Pancreas (tissue), 10 donors: ENCODE measurements at regions of chr3 and their contacts with region 1.

Region 1: GRCh38 chr3:42190701-42191462 is 75.1 kb downstream of the CCK start:
- DNase-seq: peak in 5 of 6 donors; percentile 46 to 82 (median 60)
- ATAC-seq: peak; percentile 61 to 89 (median 86)
- H3K4me3 ChIP-seq: no peak overlapping the region
- H3K27ac ChIP-seq: no peak overlapping the region
- H3K4me1 ChIP-seq: no peaks in the 10 kb centered on the region
- H3K27me3 ChIP-seq: no peaks in the 10 kb centered on the region
- CTCF ChIP-seq: peak; percentile 57 to 91 (median 74)

Region 2: GRCh38 chr3:41893977-41894376 is 296.9 kb before region 1 on chr3:
- intact Hi-C with region 1: loop called in 1 of 3 experiments (anchors 10 kb)
- DNase-seq: peak in 1 of 6 donors; percentile 10
- ATAC-seq: peak in 2 of 4 donors; percentile 42 to 67
- H3K4me3 ChIP-seq: no peak overlapping the region
- H3K27ac ChIP-seq: no peak overlapping the region
- H3K4me1 ChIP-seq: no peaks in the 10 kb centered on the region
- H3K27me3 ChIP-seq: no peaks in the 10 kb centered on the region
- CTCF ChIP-seq: peak in 2 of 4 donors; percentile 14 to 22

Region 3: DNA sequence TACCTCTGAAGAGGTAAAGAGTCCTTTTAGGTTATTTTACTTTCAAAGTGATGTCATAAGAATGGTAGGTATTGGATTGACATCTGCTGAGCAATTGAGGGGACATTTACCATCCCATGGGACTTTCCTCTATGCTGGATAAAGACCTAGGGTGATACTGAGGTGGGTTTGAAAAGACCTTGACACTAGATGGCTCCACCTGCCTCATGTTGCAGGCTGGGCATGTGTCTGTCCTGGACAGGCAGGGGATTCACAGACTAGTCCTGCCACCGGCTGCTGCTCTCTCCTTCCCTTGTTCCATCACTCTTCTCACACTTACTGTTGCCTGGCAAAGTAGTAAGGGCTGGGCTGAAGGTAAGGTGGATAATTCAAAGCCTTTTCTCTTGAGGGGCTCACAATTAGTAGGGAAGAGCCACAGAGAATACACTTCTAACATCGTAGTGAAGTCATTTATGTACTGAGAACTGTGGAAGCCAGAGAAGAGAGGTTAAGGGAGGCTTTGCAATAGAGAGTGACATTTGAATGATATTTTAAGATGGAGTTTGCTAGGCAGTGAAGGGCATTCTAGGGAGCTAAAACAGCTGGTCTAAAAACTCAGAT is 72.0 kb before region 1 on chr3:
- intact Hi-C with region 1: loop called (anchors 5 kb)
- DNase-seq: no peak
- ATAC-seq: peak in 3 of 4 donors; percentile 58 to 74 (median 63)
- H3K4me3 ChIP-seq: no peak overlapping the region
- H3K27ac ChIP-seq: no peak overlapping the region
- H3K4me1 ChIP-seq: peaks cover 7 to 15% (median 9%) of the 10 kb centered on the region in 3 donors
- H3K27me3 ChIP-seq: no peaks in the 10 kb centered on the region
- CTCF ChIP-seq: no peak